IMR-90 (cell line): ENCODE measurements at regions of chr6 and their contacts with region 1.

Region 1: DNA sequence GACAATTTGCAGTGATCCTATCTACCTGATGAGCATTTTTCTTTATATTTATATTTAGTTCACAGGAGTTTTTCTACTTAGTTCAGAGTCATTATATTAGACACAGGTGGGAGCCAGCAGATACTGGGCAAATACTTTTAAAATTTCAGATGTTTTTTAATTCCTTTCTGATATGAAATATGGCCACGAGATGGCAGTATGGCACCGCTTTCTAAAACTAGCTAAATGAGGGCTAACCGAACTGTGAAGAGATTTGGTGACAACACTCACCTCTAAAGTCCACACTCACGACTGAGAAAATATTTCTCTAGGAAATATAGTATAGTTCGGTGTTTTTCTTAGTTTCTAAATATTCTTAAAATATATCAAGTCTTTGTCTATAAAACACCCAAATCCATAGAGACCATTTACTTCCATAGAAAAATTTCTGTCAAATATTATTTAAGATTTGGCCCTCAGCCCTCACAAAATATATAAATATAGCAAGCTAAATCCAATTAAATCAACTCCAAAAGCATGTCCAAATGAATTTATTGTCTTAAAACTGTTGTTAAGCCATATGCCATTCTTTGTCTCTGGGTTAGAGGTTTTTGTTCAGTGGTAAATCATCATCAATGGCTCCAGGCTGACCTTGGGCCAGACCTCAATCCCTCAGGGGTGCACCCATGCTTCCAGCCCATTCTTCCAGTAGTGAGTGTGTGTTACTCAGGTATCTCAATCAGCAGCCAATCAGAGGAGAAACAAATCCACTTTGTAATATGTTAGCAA is 63.6 kb downstream of the HUS1B start:
- DNase-seq: peak; percentile 56
- ATAC-seq: peak; percentile 67
- H3K4me3 ChIP-seq: no peak overlapping the region
- H3K27ac ChIP-seq: no peak overlapping the region
- H3K4me1 ChIP-seq: peaks cover 3% of the 10 kb centered on the region
- H3K27me3 ChIP-seq: no peaks in the 10 kb centered on the region
- CTCF ChIP-seq: peak; percentile 78
- POLR2A ChIP-seq: no peak
- RAD21 ChIP-seq: peak; percentile 84

Region 2: GRCh38 chr6:722077-722524 is 128.8 kb after region 1 on chr6:
- CTCF ChIA-PET with region 1: interaction called, 4 read pairs
- POLR2A ChIA-PET with region 1: no interaction called
- dilution Hi-C with region 1: no loop called
- in situ Hi-C with region 1: no loop called
- intact Hi-C with region 1: loop called (anchors 5 kb)
- DNase-seq: peak; percentile 90
- ATAC-seq: peak; percentile 99
- H3K4me3 ChIP-seq: no peak overlapping the region
- H3K27ac ChIP-seq: no peak overlapping the region
- H3K4me1 ChIP-seq: no peaks in the 10 kb centered on the region
- H3K27me3 ChIP-seq: peaks cover 6% of the 10 kb centered on the region; the same call in 1 of the 2 replicates
- CTCF ChIP-seq: peak; percentile 95
- POLR2A ChIP-seq: no peak
- RAD21 ChIP-seq: peak; percentile 71

Region 3: GRCh38 chr6:797479-798077 is 204.3 kb after region 1 on chr6:
- CTCF ChIA-PET with region 1: no interaction called
- POLR2A ChIA-PET with region 1: no interaction called
- dilution Hi-C with region 1: no loop called
- in situ Hi-C with region 1: loop called (anchors 10 kb)
- intact Hi-C with region 1: loop called (anchors 2 kb)
- DNase-seq: peak; percentile 67
- ATAC-seq: peak; percentile 87
- H3K4me3 ChIP-seq: no peak overlapping the region
- H3K27ac ChIP-seq: no peak overlapping the region
- H3K4me1 ChIP-seq: no peaks in the 10 kb centered on the region
- H3K27me3 ChIP-seq: peaks cover 38% of the 10 kb centered on the region
- CTCF ChIP-seq: peak; percentile 86
- POLR2A ChIP-seq: no peak
- RAD21 ChIP-seq: peak; percentile 90

Region 4: DNA sequence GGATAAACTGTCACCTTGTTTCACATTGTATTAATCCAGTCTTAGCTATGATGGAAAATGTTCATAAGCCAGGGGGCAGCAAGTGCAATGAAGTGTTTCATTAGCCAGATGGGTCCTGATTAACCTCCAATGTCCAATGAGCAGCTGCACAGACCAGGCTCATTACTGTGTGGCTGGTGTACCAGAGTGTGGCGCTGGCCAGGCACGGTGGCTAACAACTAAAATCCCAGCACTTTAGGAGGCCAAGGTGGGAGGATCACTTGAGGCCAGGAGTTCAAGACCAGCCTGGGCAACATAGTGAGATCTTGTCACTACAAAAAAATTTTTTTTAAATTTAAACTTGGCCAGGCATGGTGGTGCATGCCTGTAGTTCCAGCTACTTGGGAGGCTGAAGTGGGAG is 516.8 kb after region 1 on chr6:
- CTCF ChIA-PET with region 1: no interaction called
- POLR2A ChIA-PET with region 1: no interaction called
- dilution Hi-C with region 1: no loop called
- in situ Hi-C with region 1: no loop called
- intact Hi-C with region 1: no loop called
- DNase-seq: no peak
- ATAC-seq: no peak
- H3K4me3 ChIP-seq: no peak overlapping the region
- H3K27ac ChIP-seq: no peak overlapping the region
- H3K4me1 ChIP-seq: peaks cover 4% of the 10 kb centered on the region; the same call in 1 of the 2 replicates
- H3K27me3 ChIP-seq: no peaks in the 10 kb centered on the region
- CTCF ChIP-seq: 0 out of 2 replicates have a peak, but pooled peaks have one; percentile 5
- POLR2A ChIP-seq: no peak
- RAD21 ChIP-seq: no peak

Region 5: DNA sequence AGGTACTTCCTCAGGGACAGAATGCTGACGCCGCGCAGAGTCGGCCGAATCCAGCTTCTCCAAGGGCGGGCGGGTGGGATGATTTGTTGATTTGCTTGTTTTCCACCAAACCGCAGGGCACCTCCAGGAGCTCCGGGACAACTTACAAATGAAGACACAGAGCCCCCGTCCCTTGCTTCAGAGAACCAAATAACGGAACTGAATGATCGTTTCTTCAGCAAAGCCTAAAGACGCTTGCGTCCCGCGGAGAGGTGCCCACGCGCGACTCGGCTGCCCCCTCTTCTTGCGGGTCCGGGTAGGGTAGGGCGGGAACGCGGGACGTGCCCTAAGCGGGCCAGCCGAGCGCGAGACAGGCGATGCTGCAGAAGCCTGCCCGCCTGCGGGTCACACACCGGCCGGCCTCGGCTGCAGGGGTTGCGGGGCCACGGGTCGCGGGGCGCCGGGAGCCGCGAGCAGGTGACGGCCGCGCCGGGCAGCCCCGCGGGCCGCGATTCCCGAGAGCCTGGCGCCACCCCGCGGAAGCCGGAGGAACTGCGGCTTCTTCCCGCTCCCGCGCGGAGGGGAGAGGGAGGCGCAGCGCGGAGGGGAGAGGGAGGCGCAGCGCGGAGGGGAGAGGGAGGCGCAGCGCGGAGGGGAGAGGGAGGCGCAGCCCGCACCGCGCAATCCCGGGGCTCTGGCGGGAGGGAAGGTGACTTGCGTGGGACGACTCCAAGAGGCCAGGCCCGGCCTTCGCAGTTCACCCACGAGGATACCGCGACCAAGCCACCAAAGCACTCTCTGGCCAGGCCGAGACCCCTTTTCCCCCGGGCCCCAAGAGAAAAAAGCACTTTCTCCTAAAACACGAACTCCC is 788.4 kb after region 1 on chr6:
- CTCF ChIA-PET with region 1: interaction called, 3 read pairs
- POLR2A ChIA-PET with region 1: no interaction called
- dilution Hi-C with region 1: no loop called
- in situ Hi-C with region 1: no loop called
- intact Hi-C with region 1: loop called (anchors 5 kb)
- DNase-seq: no peak
- ATAC-seq: peak; percentile 94
- H3K4me3 ChIP-seq: peak overlapping the region; percentile 44
- H3K27ac ChIP-seq: no peak overlapping the region
- H3K4me1 ChIP-seq: peaks cover 8% of the 10 kb centered on the region; the same call in 1 of the 2 replicates
- H3K27me3 ChIP-seq: peaks cover 46% of the 10 kb centered on the region
- CTCF ChIP-seq: peak; percentile 76
- POLR2A ChIP-seq: 0 out of 2 replicates have a peak, but pooled peaks have one; percentile 24
- RAD21 ChIP-seq: peak; percentile 87

Region 6: GRCh38 chr6:1436334-1437306 is 843.3 kb after region 1 on chr6:
- CTCF ChIA-PET with region 1: interaction called, 4 read pairs
- POLR2A ChIA-PET with region 1: no interaction called
- dilution Hi-C with region 1: no loop called
- in situ Hi-C with region 1: no loop called
- intact Hi-C with region 1: loop called (anchors 1 kb)
- DNase-seq: peak; percentile 72
- ATAC-seq: peak; percentile 99
- H3K4me3 ChIP-seq: no peak overlapping the region
- H3K27ac ChIP-seq: no peak overlapping the region
- H3K4me1 ChIP-seq: no peaks in the 10 kb centered on the region
- H3K27me3 ChIP-seq: peaks cover 20% of the 10 kb centered on the region
- CTCF ChIP-seq: peak; percentile 90
- POLR2A ChIP-seq: no peak
- RAD21 ChIP-seq: peak; percentile 84